Heart left ventricle (tissue), 16 donors: ENCODE measurements at regions of chr9 and their contacts with region 1.

Region 1: GRCh38 chr9:16221366-16221765 is 649.1 kb downstream of the BNC2 start:
- DNase-seq: peak in 2 of 5 donors; percentile 31 to 42
- ATAC-seq: peak in 1 of 4 donors; percentile 20
- H3K4me3 ChIP-seq: no peak overlapping the region
- H3K27ac ChIP-seq: peak overlapping the region in 1 of 12 donors; percentile 38
- H3K4me1 ChIP-seq: peaks cover 0 to 19% (median 7%) of the 10 kb centered on the region in 12 donors
- H3K27me3 ChIP-seq: peaks cover 0 to 5% (median 0%) of the 10 kb centered on the region in 9 donors
- CTCF ChIP-seq: no peak
- POLR2A ChIP-seq: no peak

Region 2: DNA sequence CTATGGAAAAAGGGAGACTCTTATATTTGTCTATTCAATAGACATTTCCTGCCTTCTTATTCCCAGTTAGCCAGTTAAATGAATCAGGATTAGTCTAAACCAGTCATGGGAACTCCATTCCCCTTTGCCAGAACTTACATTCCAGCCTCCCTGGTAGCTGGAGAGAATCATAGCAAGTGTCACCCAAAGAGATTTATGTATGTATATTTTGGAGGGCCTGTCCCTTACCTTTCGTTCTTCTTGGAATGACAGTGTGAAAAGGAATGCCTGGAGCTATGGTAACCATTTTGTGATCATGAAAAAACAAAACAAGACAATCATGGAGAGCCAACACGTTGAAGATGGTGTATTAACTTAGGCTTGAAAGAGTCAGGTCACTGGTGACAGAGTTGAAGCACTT is 40.8 kb before region 1 on chr9:
- intact Hi-C with region 1: no loop called
- DNase-seq: no peak
- ATAC-seq: peak in 1 of 4 donors; percentile 39
- H3K4me3 ChIP-seq: no peak overlapping the region
- H3K27ac ChIP-seq: peak overlapping the region in 1 of 12 donors; percentile 6
- H3K4me1 ChIP-seq: peaks cover 0 to 16% (median 0%) of the 10 kb centered on the region in 12 donors
- H3K27me3 ChIP-seq: no peaks in the 10 kb centered on the region
- CTCF ChIP-seq: no peak
- POLR2A ChIP-seq: no peak

Region 3: DNA sequence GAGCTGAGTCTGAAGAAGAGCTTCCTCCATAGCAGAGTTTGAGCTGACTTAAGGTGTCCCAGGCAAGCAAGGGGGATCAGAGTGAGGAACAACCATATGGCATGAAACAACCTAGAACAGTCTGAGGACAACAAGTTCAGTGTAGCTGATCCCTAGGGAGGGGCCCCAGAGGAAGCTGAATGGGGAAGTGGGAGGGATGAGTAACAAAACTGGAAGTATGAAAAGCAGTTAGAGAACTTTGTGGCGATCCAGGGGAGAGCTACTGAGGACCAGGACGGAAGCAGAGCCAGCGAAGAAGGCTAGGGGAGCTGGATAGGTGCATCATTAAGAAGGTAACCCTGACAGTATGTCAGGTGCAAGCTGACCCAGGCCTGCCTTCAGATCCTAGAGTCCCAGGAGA is 68.3 kb after region 1 on chr9:
- intact Hi-C with region 1: loop called in 1 of 10 experiments (anchors 10 kb)
- DNase-seq: peak in 1 of 5 donors; percentile 39
- ATAC-seq: peak; percentile 41 to 80 (median 56)
- H3K4me3 ChIP-seq: no peak overlapping the region
- H3K27ac ChIP-seq: no peak overlapping the region
- H3K4me1 ChIP-seq: peaks cover 0 to 10% (median 0%) of the 10 kb centered on the region in 12 donors
- H3K27me3 ChIP-seq: peaks cover 0 to 7% (median 0%) of the 10 kb centered on the region in 9 donors
- CTCF ChIP-seq: no peak
- POLR2A ChIP-seq: no peak